Sigmoid colon (tissue), 7 donors: ENCODE measurements at regions of chr16 and their contacts with region 1.

Region 1: GRCh38 chr16:9090960-9091866 is at the start of gene HAPSTR1:
- DNase-seq: peak; percentile 100
- H3K4me3 ChIP-seq: peak within 1 kb of the TSS; percentile 70 to 90 (median 85)
- H3K27ac ChIP-seq: peak within 1 kb of the TSS; percentile 97 to 99 (median 99)
- H3K4me1 ChIP-seq: peaks cover 0 to 47% (median 42%) of the 10 kb centered on the region in 4 donors
- H3K27me3 ChIP-seq: no peaks in the 10 kb centered on the region
- CTCF ChIP-seq: no peak
- EP300 ChIP-seq: no peak
- POLR2A ChIP-seq: peak; percentile 81 to 89
- total RNA-seq, gene HAPSTR1: 43.8 to 47.6 (median 46.2) TPM

Region 2: GRCh38 chr16:8963825-8964441 is 127.3 kb before region 1 on chr16 and contains the start of gene USP7:
- intact Hi-C with region 1: loop called (anchors 2 kb)
- DNase-seq: peak; percentile 95
- H3K4me3 ChIP-seq: peak within 1 kb of the TSS; percentile 57 to 91 (median 72)
- H3K27ac ChIP-seq: peak within 1 kb of the TSS; percentile 81 to 89 (median 88)
- H3K4me1 ChIP-seq: peaks cover 0 to 44% (median 41%) of the 10 kb centered on the region in 4 donors
- H3K27me3 ChIP-seq: no peaks in the 10 kb centered on the region
- CTCF ChIP-seq: no peak
- EP300 ChIP-seq: no peak
- POLR2A ChIP-seq: no peak
- total RNA-seq, gene USP7: 64.9 to 84.5 (median 80.5) TPM

Region 3: DNA sequence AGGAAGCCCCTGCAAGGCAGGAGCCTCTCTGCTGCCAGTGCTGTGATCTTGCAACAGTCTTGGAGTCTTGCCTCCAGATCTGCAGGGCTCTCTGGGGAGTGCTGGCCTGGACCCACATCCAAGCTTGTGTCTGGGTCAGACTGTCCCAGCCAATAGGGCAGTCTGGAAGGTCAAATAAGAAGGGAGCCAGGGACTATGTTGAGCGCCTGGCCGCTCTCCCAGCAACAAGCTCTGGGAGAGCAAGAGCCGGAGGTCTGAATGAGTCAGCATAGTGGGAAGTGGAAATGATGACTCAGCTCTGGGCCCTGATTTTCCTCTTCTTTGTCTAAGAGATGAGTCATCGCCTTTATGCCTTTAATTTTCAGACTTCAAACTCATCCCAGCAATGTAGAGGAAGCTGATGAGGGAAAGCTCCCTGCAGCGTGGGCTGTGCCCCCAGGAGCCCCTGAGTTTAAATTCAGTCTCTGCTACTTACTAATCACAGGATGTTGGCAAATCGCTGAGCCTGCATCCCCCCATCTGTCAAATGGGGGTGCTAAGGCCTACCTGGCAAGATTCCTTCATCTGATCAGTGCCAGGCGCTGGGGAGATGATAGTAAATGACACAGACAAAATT is 43.4 kb before region 1 on chr16:
- intact Hi-C with region 1: loop called (anchors 5 kb)
- DNase-seq: peak; percentile 95
- H3K4me3 ChIP-seq: no peak overlapping the region
- H3K27ac ChIP-seq: peak overlapping the region; percentile 63 to 77 (median 75)
- H3K4me1 ChIP-seq: peaks cover 0 to 15% (median 10%) of the 10 kb centered on the region in 4 donors
- H3K27me3 ChIP-seq: no peaks in the 10 kb centered on the region
- CTCF ChIP-seq: no peak
- EP300 ChIP-seq: peak in 2 of 4 donors; percentile 29 to 47
- POLR2A ChIP-seq: no peak